ENCODE measurements at regions of chr13 and their contacts with region 1.

Region 1: DNA sequence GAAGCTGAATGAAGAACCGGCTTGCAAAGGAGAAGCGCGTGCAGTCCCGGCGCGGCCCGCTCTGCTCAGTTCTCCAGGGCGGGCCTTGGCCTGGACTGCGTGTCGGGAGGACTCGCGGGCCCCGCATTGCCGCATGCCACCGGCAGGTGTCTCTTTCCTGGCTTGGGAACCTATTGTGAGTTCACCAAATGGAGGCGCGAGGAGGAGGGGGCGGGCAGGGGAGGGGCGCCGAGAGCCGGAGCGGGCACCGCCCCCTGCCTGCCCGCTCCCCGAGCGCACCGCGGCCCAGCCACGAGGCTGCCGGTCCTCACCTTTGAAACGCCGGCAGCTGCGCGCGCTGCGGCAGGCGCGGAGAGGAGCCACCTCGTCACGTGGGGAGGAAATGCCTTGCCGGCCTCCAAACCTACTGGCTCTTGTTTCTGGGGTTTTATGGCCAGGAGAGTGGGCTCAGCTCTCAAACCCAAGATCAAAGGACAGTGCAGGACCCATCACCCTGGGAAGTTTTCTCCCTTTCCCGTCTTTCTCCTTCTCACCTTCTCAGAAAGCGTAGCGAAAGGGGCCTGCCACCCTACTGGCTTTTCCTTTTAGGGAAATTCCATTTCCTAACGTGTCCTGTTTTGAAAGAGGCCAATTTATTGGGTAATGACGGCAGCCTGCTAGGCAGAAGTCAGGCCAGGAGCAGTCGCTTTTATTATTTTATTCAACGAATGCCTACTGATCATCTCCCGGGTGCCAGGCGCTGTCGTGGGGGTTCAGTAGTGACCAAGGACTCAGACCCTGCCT is 13.8 kb upstream of the UBE2L5 start:
- DNase-seq: peak; percentile 92 to 97 (median 95)
- ATAC-seq: peak; percentile 93 to 98 (median 97)
- H3K4me3 ChIP-seq: peak overlapping the region in 11 of 12 donors; percentile 12 to 60 (median 49)
- H3K27ac ChIP-seq: peak overlapping the region; percentile 55 to 92 (median 80)
- H3K4me1 ChIP-seq: peaks cover 0 to 22% (median 8%) of the 10 kb centered on the region in 12 donors
- H3K27me3 ChIP-seq: no peaks in the 10 kb centered on the region
- CTCF ChIP-seq: peak; percentile 73 to 96 (median 81)
- POLR2A ChIP-seq: no peak

Region 2: GRCh38 chr13:30142486-30143211 is 265.9 kb before region 1 on chr13:
- intact Hi-C with region 1: no loop called
- DNase-seq: no peak
- ATAC-seq: peak in 3 of 4 donors; percentile 45 to 51 (median 49)
- H3K4me3 ChIP-seq: no peak overlapping the region
- H3K27ac ChIP-seq: peak overlapping the region in 1 of 12 donors; percentile 74
- H3K4me1 ChIP-seq: peaks cover 0 to 27% (median 6%) of the 10 kb centered on the region in 12 donors
- H3K27me3 ChIP-seq: no peaks in the 10 kb centered on the region
- CTCF ChIP-seq: no peak
- POLR2A ChIP-seq: no peak

Region 3: GRCh38 chr13:30306762-30307193 is 101.7 kb before region 1 on chr13:
- intact Hi-C with region 1: loop called in 2 of 10 experiments (anchors 10 kb)
- DNase-seq: peak; percentile 95 to 96 (median 96)
- ATAC-seq: peak; percentile 93 to 97 (median 96)
- H3K4me3 ChIP-seq: peak overlapping the region; percentile 80 to 100 (median 96)
- H3K27ac ChIP-seq: peak overlapping the region; percentile 87 to 98 (median 96)
- H3K4me1 ChIP-seq: peaks cover 3 to 56% (median 28%) of the 10 kb centered on the region in 12 donors
- H3K27me3 ChIP-seq: no peaks in the 10 kb centered on the region
- CTCF ChIP-seq: no peak
- POLR2A ChIP-seq: no peak

Region 4: DNA sequence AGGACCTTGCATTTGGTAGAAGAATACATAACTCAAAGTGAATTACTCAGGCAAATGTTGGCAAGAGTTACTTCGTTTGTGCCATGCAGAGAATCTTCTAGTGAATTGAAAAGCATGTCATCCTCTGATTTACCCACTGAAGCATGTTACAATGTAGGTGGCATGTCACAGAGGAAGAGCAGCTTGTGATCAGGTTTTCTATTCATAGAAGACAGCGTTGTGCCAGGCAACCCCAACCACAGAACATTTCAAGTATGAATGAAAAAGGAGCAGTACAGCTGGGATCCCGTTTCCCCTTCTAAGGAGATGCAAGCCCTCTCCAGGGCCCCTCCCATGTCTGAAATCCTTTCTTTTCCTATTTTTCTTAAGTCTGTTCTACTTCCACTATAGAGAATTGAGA is 95.2 kb before region 1 on chr13:
- intact Hi-C with region 1: loop called in 2 of 10 experiments (anchors 10 kb)
- DNase-seq: no peak
- ATAC-seq: peak in 3 of 4 donors; percentile 7 to 25 (median 23)
- H3K4me3 ChIP-seq: no peak overlapping the region
- H3K27ac ChIP-seq: peak overlapping the region in 5 of 12 donors; percentile 8 to 39 (median 14)
- H3K4me1 ChIP-seq: peaks cover 0 to 61% (median 31%) of the 10 kb centered on the region in 12 donors
- H3K27me3 ChIP-seq: no peaks in the 10 kb centered on the region
- CTCF ChIP-seq: no peak
- POLR2A ChIP-seq: no peak

Region 5: GRCh38 chr13:30443957-30444404 is 35.5 kb after region 1 on chr13:
- intact Hi-C with region 1: loop called in 3 of 10 experiments (anchors 1 to 5 kb)
- DNase-seq: no peak
- ATAC-seq: no peak
- H3K4me3 ChIP-seq: no peak overlapping the region
- H3K27ac ChIP-seq: no peak overlapping the region
- H3K4me1 ChIP-seq: peaks cover 0 to 19% (median 11%) of the 10 kb centered on the region in 12 donors
- H3K27me3 ChIP-seq: no peaks in the 10 kb centered on the region
- CTCF ChIP-seq: no peak
- POLR2A ChIP-seq: no peak

Region 6: GRCh38 chr13:30457306-30457891 is 48.9 kb after region 1 on chr13:
- intact Hi-C with region 1: loop called in 4 of 10 experiments (anchors 5 kb)
- DNase-seq: no peak
- ATAC-seq: no peak
- H3K4me3 ChIP-seq: no peak overlapping the region
- H3K27ac ChIP-seq: no peak overlapping the region
- H3K4me1 ChIP-seq: peaks cover 0 to 20% (median 11%) of the 10 kb centered on the region in 12 donors
- H3K27me3 ChIP-seq: no peaks in the 10 kb centered on the region
- CTCF ChIP-seq: no peak
- POLR2A ChIP-seq: no peak

Region 7: GRCh38 chr13:30486230-30487074 is 77.9 kb after region 1 on chr13:
- intact Hi-C with region 1: no loop called
- DNase-seq: no peak
- ATAC-seq: peak in 2 of 4 donors; percentile 24 to 44
- H3K4me3 ChIP-seq: no peak overlapping the region
- H3K27ac ChIP-seq: no peak overlapping the region
- H3K4me1 ChIP-seq: peaks cover 0 to 8% (median 0%) of the 10 kb centered on the region in 12 donors
- H3K27me3 ChIP-seq: no peaks in the 10 kb centered on the region
- CTCF ChIP-seq: no peak
- POLR2A ChIP-seq: no peak

Region 8: GRCh38 chr13:30572859-30573275 is 164.4 kb after region 1 on chr13:
- intact Hi-C with region 1: loop called in 3 of 10 experiments (anchors 5 to 10 kb)
- DNase-seq: peak in 1 of 5 donors; percentile 17
- ATAC-seq: peak in 3 of 4 donors; percentile 59 to 81 (median 62)
- H3K4me3 ChIP-seq: peak overlapping the region in 10 of 12 donors; percentile 28 to 56 (median 42)
- H3K27ac ChIP-seq: peak overlapping the region in 11 of 12 donors; percentile 1 to 82 (median 53)
- H3K4me1 ChIP-seq: peaks cover 0 to 57% (median 15%) of the 10 kb centered on the region in 12 donors
- H3K27me3 ChIP-seq: no peaks in the 10 kb centered on the region
- CTCF ChIP-seq: peak in 6 of 12 donors; percentile 35 to 52 (median 42)
- POLR2A ChIP-seq: no peak